Activated CD8-positive, alpha-beta T cell treated with anti-CD3 and anti-CD28 coated beads, Interleukin-2, amount 10 ng/mL, durations not matched to agents 7 days and 5 days (primary cell): ENCODE measurements at regions of chr11 and their contacts with region 1.

Region 1: GRCh38 chr11:121591405-121592033 is 138.8 kb upstream of the SORL1-AS1 start:
- DNase-seq: peak; percentile 84
- ATAC-seq: peak; percentile 86
- H3K4me3 Mint-ChIP-seq: no peak overlapping the region
- H3K27ac Mint-ChIP-seq: no peak overlapping the region
- H3K4me1 Mint-ChIP-seq: peaks cover 12% of the 10 kb centered on the region
- H3K27me3 Mint-ChIP-seq: no peaks in the 10 kb centered on the region

Region 2: DNA sequence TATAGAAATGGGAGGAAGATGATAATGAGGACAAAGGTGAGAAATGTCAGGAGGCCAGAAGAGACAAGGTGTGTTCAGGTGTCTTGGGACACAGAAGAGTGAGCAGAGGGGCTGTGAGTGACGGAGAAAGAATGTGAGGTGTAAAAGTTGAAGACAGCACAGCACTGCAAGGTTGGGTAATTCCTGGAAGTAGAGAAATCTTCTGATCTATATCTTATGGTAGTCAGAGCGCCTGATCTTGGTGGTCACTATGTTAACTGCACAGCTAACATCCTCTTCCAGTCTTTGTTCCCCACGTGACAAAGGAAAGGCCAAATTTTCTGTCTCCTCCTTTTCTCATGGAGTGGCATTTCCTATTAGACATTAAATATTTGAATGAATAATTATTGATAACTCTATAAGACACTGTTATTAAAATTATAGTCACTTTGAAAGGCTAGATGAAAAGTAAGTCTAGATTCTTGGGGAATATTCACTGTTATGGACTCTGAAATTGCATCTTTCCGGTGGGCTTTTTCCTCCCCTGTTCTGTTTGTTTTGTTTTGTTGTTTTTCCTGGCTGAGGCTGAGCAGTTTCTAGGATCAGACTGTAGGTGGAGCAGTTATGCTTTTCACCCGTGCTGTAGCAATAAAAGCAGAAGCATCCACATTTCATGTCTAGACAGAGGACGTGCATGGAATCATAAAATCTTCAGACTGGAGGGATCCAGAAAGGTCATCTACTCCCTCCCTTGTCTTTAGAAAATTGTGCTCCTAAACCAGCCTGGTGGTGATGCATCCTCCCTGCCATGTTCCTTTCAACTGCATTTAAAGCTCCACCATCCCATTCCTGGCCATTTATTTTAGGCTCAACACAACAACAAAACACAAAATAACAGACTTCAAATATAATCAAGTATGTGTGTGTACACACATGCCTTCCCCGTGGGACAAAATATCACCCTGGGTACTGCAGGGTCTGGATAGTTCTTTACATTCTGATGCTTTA is 272.4 kb before region 1 on chr11:
- CTCF ChIA-PET with region 1: interaction called, 29 read pairs
- POLR2A ChIA-PET with region 1: no interaction called
- DNase-seq: peak; percentile 46
- ATAC-seq: peak; percentile 77
- H3K4me3 Mint-ChIP-seq: no peak overlapping the region
- H3K27ac Mint-ChIP-seq: peak overlapping the region; percentile 36
- H3K4me1 Mint-ChIP-seq: peaks cover 25% of the 10 kb centered on the region
- H3K27me3 Mint-ChIP-seq: peaks cover 12% of the 10 kb centered on the region

Region 3: DNA sequence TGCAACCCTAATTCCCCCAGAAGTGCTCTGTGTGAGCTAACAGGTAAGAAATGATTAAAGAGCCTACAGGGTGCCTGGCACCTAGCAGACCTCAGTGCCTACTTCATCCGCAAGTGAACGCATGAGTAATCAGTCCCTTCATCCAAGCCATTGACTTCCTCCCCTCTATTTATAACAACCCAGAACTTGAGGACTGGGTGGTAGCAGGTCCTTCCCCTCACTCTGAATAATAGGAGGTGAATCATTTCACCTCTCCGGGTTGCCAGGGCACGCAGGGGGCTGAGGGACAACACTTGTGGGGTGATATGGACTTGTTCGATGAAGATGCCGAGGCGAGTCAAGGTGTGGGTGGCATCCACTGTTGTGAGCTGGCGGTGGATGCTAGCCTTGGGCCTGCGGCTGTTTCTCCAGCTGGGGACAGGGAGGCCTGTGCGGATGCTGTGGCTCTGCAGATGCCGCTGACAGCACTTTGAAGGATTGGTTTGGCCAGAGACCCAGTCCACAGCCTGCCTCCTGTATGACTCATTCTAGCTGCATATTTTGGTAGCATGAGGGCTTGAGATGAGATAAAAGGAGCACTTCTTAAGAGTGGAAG is 127.1 kb before region 1 on chr11:
- CTCF ChIA-PET with region 1: interaction called, 10 read pairs
- POLR2A ChIA-PET with region 1: no interaction called
- DNase-seq: peak; percentile 86
- ATAC-seq: peak; percentile 78
- H3K4me3 Mint-ChIP-seq: peak overlapping the region; percentile 67
- H3K27ac Mint-ChIP-seq: peak overlapping the region; percentile 93
- H3K4me1 Mint-ChIP-seq: peaks cover 98% of the 10 kb centered on the region
- H3K27me3 Mint-ChIP-seq: no peaks in the 10 kb centered on the region

Region 4: DNA sequence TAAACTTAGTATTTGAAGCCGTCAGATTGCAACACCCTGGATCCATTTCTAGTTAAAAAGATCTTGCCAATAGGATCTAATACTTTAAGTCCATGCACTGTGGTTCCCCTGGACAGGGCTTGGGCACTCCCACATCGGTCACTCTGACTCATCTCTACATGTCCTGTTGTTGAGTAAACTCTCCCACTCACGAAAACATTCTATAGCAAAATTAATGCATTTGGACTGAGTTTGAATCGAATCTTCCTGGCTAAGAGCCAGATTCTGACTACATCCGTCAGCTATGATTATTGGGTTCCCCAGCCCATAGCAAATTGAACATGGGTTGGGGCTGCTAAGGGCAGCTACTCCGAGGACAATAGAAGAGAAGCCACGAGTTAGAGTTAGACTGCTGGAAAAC is 43.4 kb after region 1 on chr11:
- CTCF ChIA-PET with region 1: no interaction called
- POLR2A ChIA-PET with region 1: no interaction called
- DNase-seq: no peak
- ATAC-seq: no peak
- H3K4me3 Mint-ChIP-seq: no peak overlapping the region
- H3K27ac Mint-ChIP-seq: no peak overlapping the region
- H3K4me1 Mint-ChIP-seq: no peaks in the 10 kb centered on the region
- H3K27me3 Mint-ChIP-seq: no peaks in the 10 kb centered on the region